ENCODE measurements at regions of chr13 and their contacts with region 1.

Region 1: GRCh38 chr13:65656740-65657329 is 1573.3 kb downstream of the PCDH9 start:
- DNase-seq: no peak
- H3K4me3 Mint-ChIP-seq: no peak overlapping the region
- H3K27ac Mint-ChIP-seq: no peak overlapping the region
- H3K4me1 Mint-ChIP-seq: no peaks in the 10 kb centered on the region
- H3K27me3 Mint-ChIP-seq: no peaks in the 10 kb centered on the region
- CTCF ChIP-seq: no peak

Region 2: DNA sequence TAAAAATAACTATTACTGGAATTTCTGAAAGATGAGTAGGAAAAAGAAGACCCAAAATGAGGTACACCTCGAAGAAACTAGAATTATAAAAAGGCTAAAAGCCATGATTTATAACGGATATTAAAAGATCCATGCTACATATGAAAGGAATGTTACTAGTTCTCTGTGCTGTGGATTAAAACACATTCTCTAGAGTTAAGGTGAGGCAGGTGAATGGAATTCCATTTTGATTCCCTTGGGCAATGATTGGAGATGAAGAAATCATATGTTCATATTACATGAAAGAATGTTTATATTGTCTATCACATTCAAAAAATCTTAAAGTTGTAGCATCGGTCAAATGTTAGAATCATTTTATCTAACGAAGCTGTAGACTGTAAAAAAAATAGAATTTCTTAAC is 789.6 kb after region 1 on chr13:
- CTCF ChIA-PET with region 1: no interaction called
- intact Hi-C with region 1: no loop called
- DNase-seq: no peak
- H3K4me3 Mint-ChIP-seq: no peak overlapping the region
- H3K27ac Mint-ChIP-seq: no peak overlapping the region
- H3K4me1 Mint-ChIP-seq: no peaks in the 10 kb centered on the region
- H3K27me3 Mint-ChIP-seq: no peaks in the 10 kb centered on the region
- CTCF ChIP-seq: no peak

Region 3: DNA sequence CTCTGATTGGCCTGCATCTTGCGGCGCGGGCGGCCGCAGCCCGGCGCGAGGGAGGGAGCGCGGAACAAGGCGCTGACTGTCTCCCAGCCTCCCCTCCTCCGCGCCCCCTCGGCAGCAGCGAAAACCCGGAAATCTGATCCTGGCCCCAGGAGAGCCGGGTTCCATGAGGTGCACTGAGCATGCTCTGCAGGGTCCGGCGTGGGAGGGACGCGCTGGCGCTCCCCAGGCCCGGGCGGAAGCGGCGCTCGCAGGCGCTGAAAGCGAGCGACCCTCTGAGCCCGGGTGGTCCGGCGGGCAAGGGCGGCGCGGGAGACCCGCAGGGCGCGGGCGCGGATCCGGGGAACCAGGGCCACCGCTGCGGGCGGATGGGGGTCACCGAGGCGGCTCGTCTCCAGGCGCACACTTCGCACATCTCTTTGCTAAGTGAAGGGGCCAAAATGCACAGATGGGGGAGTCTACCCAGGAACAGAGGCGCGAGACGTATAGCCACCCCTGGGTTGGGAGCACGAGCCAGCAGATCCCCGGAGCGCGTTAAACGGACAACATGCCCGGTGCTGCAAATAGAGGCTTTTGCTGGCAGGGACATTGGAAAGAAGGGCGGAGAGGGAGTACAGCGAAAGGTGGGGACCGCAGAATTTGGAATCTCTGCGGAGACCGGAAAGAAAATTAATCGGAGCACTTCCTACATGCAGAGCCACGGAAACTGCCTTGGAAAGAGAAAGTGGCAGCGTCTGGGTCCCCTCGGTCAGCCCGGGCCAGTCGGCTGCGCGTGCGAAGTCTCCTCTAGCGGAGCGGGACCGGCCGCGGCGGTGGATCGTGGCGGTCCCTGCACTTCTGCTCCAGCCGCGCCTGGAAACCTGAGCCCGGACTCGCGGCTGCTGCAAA is 1573.8 kb after region 1 on chr13:
- CTCF ChIA-PET with region 1: no interaction called
- intact Hi-C with region 1: loop called (anchors 10 kb)
- DNase-seq: peak; percentile 79
- H3K4me3 Mint-ChIP-seq: no peak overlapping the region
- H3K27ac Mint-ChIP-seq: no peak overlapping the region
- H3K4me1 Mint-ChIP-seq: no peaks in the 10 kb centered on the region
- H3K27me3 Mint-ChIP-seq: no peaks in the 10 kb centered on the region
- CTCF ChIP-seq: no peak

Measured in Calu3 (cell line).